Prostate gland (tissue), 2 donors: ENCODE measurements at regions of chr11 and their contacts with region 1.

Region 1: GRCh38 chr11:12888525-12889158 is 120.5 kb upstream of the RASSF10 start:
- DNase-seq: peak; percentile 85
- H3K4me3 ChIP-seq: no peak overlapping the region
- H3K27ac ChIP-seq: peak overlapping the region; percentile 41 to 49
- H3K4me1 ChIP-seq: no peaks in the 10 kb centered on the region
- H3K27me3 ChIP-seq: no peaks in the 10 kb centered on the region
- CTCF ChIP-seq: peak; percentile 44 to 85 (median 79)
- POLR2A ChIP-seq: no peak

Region 2: GRCh38 chr11:12485328-12485727 is 403.3 kb before region 1 on chr11:
- intact Hi-C with region 1: loop called (anchors 10 kb)
- DNase-seq: no peak
- H3K4me3 ChIP-seq: no peak overlapping the region
- H3K27ac ChIP-seq: no peak overlapping the region
- H3K4me1 ChIP-seq: no peaks in the 10 kb centered on the region
- H3K27me3 ChIP-seq: no peaks in the 10 kb centered on the region
- CTCF ChIP-seq: peak in 1 of 4 experiments; percentile 51
- POLR2A ChIP-seq: no peak

Region 3: GRCh38 chr11:13140028-13140870 is 251.6 kb after region 1 on chr11:
- intact Hi-C with region 1: no loop called
- DNase-seq: no peak
- H3K4me3 ChIP-seq: no peak overlapping the region
- H3K27ac ChIP-seq: no peak overlapping the region
- H3K4me1 ChIP-seq: peaks cover 6% of the 10 kb centered on the region
- H3K27me3 ChIP-seq: no peaks in the 10 kb centered on the region
- CTCF ChIP-seq: no peak
- POLR2A ChIP-seq: no peak